ENCODE measurements at regions of chr13 and their contacts with region 1.

Region 1: GRCh38 chr13:36297366-36298338 is at the start of gene CCDC169:
- DNase-seq: peak; percentile 83 to 94
- H3K4me3 ChIP-seq: peak within 1 kb of the TSS; percentile 66 to 82 (median 70)
- H3K27ac ChIP-seq: peak within 1 kb of the TSS; percentile 93
- H3K4me1 ChIP-seq: peaks cover 0 to 15% (median 12%) of the 10 kb centered on the region in 4 experiments; a peak in 3 of 7 replicates
- H3K27me3 ChIP-seq: no peaks in the 10 kb centered on the region
- CTCF ChIP-seq: no peak
- EP300 ChIP-seq: peak in 1 of 2 experiments; percentile 44; a peak in 1 of 3 replicates
- POLR2A ChIP-seq: peak; percentile 80 to 96
- RAD21 ChIP-seq: no peak; a peak in 1 of 4 replicates
- total RNA-seq, gene CCDC169: 43.3 and 44.0 TPM in 2 replicates

Region 2: GRCh38 chr13:36261976-36262375 is 35.7 kb before region 1 on chr13:
- CTCF ChIA-PET with region 1: no interaction called
- POLR2A ChIA-PET with region 1: no interaction called
- DNase-seq: no peak
- H3K4me3 ChIP-seq: no peak overlapping the region
- H3K27ac ChIP-seq: no peak overlapping the region
- H3K4me1 ChIP-seq: peaks cover 0 to 4% (median 0%) of the 10 kb centered on the region in 4 experiments; a peak in 2 of 7 replicates
- H3K27me3 ChIP-seq: no peaks in the 10 kb centered on the region
- CTCF ChIP-seq: no peak
- EP300 ChIP-seq: no peak
- POLR2A ChIP-seq: no peak
- RAD21 ChIP-seq: no peak

Region 3: GRCh38 chr13:36310417-36311108 is 12.9 kb after region 1 on chr13:
- CTCF ChIA-PET with region 1: interaction called, 6 read pairs
- POLR2A ChIA-PET with region 1: interaction called, 14 read pairs
- DNase-seq: no peak
- H3K4me3 ChIP-seq: no peak overlapping the region
- H3K27ac ChIP-seq: no peak overlapping the region
- H3K4me1 ChIP-seq: peaks cover 0 to 7% (median 4%) of the 10 kb centered on the region in 4 experiments; a peak in 5 of 7 replicates
- H3K27me3 ChIP-seq: no peaks in the 10 kb centered on the region
- CTCF ChIP-seq: no peak
- EP300 ChIP-seq: no peak
- POLR2A ChIP-seq: no peak
- RAD21 ChIP-seq: no peak

Region 4: DNA sequence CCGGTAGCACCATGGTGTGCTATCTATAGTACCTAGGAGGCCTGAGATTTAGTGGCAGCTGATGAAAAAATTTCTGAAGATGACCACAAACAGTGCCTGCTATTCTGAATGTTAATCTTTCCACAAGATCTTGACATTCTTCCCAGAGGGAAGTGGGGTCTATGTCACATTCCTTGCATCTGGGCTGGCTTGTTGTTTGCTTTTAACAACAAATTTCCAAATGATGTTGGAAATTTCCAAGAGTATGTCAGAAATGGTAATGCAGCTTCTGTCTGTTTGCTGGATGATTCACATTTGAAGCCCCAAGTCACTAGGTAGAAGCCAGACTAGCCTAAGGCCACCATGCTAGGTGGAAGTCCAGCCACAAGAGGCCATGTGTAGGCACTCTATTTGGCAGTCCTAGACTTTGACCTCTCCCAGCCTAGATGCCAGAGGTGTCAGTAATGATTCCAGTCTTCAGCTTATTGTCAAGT is 26.4 kb after region 1 on chr13:
- CTCF ChIA-PET with region 1: no interaction called
- POLR2A ChIA-PET with region 1: interaction called, 30 read pairs
- DNase-seq: no peak
- H3K4me3 ChIP-seq: no peak overlapping the region
- H3K27ac ChIP-seq: no peak overlapping the region
- H3K4me1 ChIP-seq: peaks cover 0 to 7% (median 3%) of the 10 kb centered on the region in 4 experiments; a peak in 3 of 7 replicates
- H3K27me3 ChIP-seq: no peaks in the 10 kb centered on the region
- CTCF ChIP-seq: no peak
- EP300 ChIP-seq: no peak
- POLR2A ChIP-seq: no peak
- RAD21 ChIP-seq: no peak

Region 5: GRCh38 chr13:36543671-36544070 is 246.0 kb after region 1 on chr13:
- CTCF ChIA-PET with region 1: no interaction called
- POLR2A ChIA-PET with region 1: no interaction called
- DNase-seq: no peak
- H3K4me3 ChIP-seq: no peak overlapping the region
- H3K27ac ChIP-seq: no peak overlapping the region
- H3K4me1 ChIP-seq: no peaks in the 10 kb centered on the region
- H3K27me3 ChIP-seq: no peaks in the 10 kb centered on the region
- CTCF ChIP-seq: no peak
- EP300 ChIP-seq: no peak
- POLR2A ChIP-seq: no peak
- RAD21 ChIP-seq: no peak